Thyroid gland (tissue), 4 donors: ENCODE measurements at regions of chr3 and their contacts with region 1.

Region 1: GRCh38 chr3:41893977-41894376 is 67.9 kb downstream of the ULK4 start:
- DNase-seq: no peak
- H3K4me3 ChIP-seq: no peak overlapping the region
- H3K27ac ChIP-seq: no peak overlapping the region
- H3K4me1 ChIP-seq: no peaks in the 10 kb centered on the region
- H3K27me3 ChIP-seq: no peaks in the 10 kb centered on the region
- CTCF ChIP-seq: peak in 5 of 6 experiments; percentile 20 to 73 (median 55)
- POLR2A ChIP-seq: no peak

Region 2: DNA sequence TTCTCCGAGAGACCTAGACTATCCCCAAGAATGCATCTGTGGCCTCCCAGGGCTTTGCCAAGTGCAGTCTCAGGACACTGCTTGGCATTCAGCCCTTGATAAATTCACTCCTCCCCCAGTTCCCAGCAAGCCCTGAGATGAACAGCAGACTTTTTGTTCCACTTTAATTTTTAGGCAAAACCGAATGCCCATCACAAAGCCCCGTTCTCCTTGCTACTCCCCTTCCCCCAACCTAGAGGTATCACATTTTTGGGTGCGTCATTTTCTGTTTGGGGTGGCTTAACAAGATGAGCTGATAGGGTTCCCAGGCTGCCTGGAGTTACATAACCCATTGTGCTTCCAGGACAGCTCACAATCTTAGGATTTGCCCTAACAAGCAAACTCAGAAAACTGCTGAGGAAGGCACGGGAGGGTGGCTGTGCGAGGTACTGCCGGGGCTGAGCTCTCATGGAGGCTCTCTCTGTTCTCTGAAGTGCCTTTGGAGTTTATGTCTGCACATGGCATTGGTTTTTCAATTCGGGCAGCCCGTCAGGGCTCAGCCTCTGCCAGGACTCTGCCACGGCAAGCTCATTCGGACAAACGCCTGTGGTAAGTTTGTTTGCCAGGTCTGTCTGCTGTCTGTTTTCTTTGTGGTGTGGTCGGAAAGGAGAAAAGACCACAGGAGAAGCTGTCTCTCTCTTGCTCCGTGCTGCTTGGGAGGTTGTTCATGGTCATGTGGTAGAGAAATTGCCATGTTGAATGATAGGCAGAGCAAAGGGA is 197.2 kb after region 1 on chr3 and contains the start of gene TRAK1:
- intact Hi-C with region 1: loop called (anchors 10 kb)
- DNase-seq: peak; percentile 87
- H3K4me3 ChIP-seq: no peak within 1 kb of the TSS
- H3K27ac ChIP-seq: peak within 1 kb of the TSS; percentile 85 to 95 (median 89)
- H3K4me1 ChIP-seq: peaks cover 63 to 76% of the 10 kb centered on the region in 2 donors
- H3K27me3 ChIP-seq: no peaks in the 10 kb centered on the region
- CTCF ChIP-seq: peak in 2 of 6 experiments; percentile 5 to 17
- POLR2A ChIP-seq: peak in 1 of 2 donors; percentile 41
- total RNA-seq, gene TRAK1: 46.1 to 87.8 (median 76.4) TPM

Region 3: DNA sequence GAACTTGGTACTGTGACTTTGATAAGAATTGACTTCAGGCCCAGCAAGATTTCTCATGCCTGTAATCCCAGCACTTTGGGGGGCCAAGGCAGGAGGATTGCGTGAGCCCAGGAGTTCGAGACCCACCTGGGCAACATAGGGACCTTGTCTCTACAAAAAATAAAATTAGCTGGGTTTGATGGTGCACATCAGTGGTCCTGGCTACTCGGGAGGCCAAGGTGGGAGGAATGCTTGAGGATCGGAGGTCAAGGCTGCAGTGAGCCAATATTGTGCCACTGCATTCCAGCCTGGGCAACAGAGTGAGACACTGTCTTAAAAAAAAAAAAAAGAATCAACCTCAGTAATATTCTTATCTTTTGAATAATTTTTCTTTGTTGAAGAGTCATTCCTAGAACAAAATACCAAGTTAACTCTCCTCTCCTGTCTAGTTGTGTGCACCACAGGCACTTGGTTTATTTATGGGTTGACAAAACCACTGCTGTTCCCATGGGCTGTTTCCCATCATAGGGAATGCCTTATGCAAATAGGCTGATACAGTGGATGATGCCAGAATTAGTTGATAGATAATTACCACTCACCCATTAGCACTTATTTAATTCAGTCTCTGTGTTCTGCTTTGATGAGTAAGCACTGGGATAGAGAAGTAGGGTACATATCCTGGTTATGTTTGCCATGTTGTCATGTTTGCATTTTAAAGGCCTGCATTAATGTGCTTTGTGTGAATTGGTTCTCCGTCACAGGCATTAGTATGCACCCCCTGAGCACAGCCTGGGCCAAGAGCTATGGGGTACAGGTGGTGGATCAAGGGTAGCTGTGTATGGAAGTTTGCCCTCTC is 230.1 kb after region 1 on chr3:
- intact Hi-C with region 1: no loop called
- DNase-seq: no peak
- H3K4me3 ChIP-seq: no peak overlapping the region
- H3K27ac ChIP-seq: no peak overlapping the region
- H3K4me1 ChIP-seq: peaks cover 24 to 34% of the 10 kb centered on the region in 2 donors
- H3K27me3 ChIP-seq: no peaks in the 10 kb centered on the region
- CTCF ChIP-seq: no peak
- POLR2A ChIP-seq: no peak

Region 4: DNA sequence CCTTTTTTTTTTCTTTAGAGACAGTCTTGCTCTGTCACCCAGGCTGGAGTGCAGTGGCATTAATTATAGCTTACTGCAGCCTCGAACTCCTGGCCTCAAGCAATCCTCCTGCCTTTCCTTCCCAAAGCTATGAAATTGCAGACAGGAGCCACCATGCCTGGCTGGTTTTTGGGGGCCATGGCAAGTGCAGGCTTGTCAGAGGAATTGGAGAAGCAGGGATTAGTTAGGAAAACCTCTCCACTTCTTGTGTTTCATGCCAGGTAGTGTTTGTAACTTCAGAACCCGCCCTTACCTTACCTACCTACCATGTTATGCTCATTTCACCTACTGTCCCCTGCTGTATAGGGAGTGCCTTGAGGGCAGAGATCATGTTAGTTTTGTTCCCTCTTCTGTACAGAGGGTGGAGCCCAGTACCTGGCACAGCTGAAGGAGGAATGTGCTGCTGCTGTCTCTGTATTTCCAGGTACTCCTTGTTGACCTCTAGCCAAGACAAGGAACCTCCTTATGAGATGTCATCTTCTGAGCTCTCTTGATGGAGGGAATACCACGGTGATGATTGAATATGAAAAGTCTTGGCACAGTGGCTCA is 241.0 kb after region 1 on chr3:
- intact Hi-C with region 1: no loop called
- DNase-seq: no peak
- H3K4me3 ChIP-seq: no peak overlapping the region
- H3K27ac ChIP-seq: no peak overlapping the region
- H3K4me1 ChIP-seq: peaks cover 9 to 13% of the 10 kb centered on the region in 2 donors
- H3K27me3 ChIP-seq: no peaks in the 10 kb centered on the region
- CTCF ChIP-seq: no peak
- POLR2A ChIP-seq: no peak